ENCODE measurements at regions of chr1 and their contacts with region 1.

Region 1: DNA sequence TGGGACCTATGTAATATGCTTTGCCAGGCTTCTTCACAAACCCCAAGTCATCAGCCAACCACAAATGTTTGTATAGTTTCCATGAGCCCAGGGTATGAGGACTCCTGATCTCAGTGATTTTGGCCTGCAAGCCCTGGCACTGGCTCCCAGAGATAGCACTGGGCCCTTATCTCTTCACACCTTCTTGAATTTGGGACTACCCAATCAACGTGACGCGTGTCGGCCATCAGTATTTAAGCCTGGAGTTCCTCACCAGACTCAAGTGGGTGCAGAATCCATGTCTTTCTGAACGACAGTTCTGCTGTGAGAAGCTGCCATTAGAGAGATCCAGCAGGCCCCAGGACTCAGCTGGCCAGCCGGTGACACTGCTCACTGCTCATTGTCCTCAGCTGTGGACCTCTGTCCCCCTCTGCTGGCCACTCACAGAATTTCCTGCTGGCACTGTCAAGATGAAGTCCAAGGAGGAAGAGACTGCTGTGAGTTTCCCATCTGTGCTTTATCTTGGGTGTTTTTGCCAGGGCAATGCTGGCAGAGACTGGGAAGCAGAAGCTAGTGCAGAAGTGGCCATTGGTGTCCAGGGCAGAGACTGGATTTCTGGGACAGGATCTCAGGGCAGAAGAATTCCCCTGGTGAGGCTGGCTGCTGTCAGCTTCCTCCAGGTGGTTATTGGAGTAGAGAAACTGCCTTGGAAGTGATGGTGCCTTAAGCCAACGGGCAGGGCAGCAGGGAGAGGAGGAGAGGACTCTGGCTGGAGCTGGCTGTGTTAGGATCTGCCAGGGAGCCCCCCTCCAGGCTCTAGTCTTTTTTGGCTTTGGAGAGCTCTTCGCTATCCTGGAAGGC is 28.4 kb downstream of the TMCC2 start:
- DNase-seq: peak; percentile 83 to 93 (median 92)
- H3K4me3 ChIP-seq: no peak overlapping the region
- H3K27ac ChIP-seq: no peak overlapping the region
- H3K4me1 ChIP-seq: peaks cover 5% of the 10 kb centered on the region
- H3K27me3 ChIP-seq: no peaks in the 10 kb centered on the region
- CTCF ChIP-seq: peak; percentile 90 to 97 (median 96)
- EP300 ChIP-seq: no peak
- POLR2A ChIP-seq: no peak

Region 2: DNA sequence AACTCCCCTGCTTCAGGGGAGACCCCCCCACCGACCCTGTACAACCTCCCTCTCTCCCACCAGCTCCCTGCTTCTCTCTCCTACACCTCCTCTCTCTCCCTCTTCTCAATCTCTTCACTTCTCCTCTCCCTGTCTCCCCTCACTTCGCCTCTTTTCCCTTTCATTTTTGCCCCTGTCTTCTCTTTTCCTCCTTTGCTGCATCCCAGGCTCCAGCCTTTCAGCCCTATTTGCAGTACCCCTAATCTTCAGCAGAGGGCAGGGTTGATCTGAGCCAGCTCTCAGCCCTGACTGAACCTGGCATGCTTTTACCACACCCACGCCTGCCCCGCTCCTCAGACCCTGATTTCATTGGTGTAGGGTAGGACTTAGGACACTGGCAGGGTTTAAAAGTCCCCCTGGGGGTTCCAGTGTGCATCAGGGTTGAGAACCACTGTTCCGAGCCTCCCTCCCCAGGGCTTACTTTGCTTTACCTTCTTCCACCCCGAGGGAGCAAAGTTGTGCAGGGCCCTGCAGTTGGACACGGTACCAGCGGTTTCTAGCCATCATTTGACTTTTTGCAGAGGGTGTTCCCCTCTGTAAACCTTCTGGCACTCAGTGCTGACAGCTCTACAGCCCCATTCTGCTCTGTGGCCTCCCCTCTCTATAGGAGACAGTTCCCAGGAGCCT is 280.5 kb before region 1 on chr1:
- intact Hi-C with region 1: loop called in 2 of 4 experiments (anchors 5 kb)
- DNase-seq: peak; percentile 25 to 62 (median 55)
- H3K4me3 ChIP-seq: no peak overlapping the region
- H3K27ac ChIP-seq: no peak overlapping the region
- H3K4me1 ChIP-seq: no peaks in the 10 kb centered on the region
- H3K27me3 ChIP-seq: no peaks in the 10 kb centered on the region
- CTCF ChIP-seq: peak; percentile 63 to 70 (median 66)
- EP300 ChIP-seq: no peak
- POLR2A ChIP-seq: no peak

Region 3: DNA sequence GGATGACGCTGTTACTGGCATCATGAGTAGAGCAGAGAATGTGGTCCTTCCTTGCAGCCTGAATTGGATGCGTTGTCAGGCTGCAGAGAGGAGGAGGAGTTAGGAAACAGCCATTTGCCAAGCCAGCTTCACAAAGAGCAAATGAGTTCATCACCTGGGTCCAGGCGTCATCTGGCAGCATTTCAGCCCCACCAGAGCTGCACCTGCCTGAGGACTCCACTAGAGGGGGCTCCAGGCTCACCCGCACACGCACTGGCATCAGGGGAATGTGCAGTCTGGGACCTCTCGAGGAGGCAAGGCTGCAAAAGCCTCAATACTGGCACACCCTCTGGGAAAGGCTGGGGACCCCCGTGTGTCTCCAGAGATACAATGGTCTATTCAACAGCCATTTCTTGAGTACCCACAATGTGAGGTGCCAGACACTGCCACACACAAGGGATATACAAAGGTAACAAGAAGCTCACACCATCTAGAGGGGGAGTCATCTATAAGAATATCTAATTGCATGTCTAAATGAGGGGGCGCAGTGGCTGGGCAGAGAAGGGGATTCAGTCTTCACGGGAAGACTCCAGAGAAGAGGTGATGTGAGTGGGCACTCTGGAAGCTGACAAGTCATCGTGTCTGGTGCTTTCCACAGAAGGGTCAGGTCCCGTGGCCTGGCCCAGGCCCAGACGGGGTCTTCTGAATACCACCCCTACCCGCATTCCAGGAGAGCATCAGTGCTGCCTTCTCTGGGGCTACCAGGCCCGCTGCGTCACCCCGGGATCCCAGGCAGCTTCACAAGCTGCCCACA is 266.7 kb before region 1 on chr1:
- intact Hi-C with region 1: loop called in 1 of 4 experiments (anchors 5 kb)
- DNase-seq: peak; percentile 35 to 82 (median 61)
- H3K4me3 ChIP-seq: no peak overlapping the region
- H3K27ac ChIP-seq: no peak overlapping the region
- H3K4me1 ChIP-seq: no peaks in the 10 kb centered on the region
- H3K27me3 ChIP-seq: no peaks in the 10 kb centered on the region
- CTCF ChIP-seq: peak; percentile 56 to 70 (median 63)
- EP300 ChIP-seq: no peak
- POLR2A ChIP-seq: no peak

Region 4: DNA sequence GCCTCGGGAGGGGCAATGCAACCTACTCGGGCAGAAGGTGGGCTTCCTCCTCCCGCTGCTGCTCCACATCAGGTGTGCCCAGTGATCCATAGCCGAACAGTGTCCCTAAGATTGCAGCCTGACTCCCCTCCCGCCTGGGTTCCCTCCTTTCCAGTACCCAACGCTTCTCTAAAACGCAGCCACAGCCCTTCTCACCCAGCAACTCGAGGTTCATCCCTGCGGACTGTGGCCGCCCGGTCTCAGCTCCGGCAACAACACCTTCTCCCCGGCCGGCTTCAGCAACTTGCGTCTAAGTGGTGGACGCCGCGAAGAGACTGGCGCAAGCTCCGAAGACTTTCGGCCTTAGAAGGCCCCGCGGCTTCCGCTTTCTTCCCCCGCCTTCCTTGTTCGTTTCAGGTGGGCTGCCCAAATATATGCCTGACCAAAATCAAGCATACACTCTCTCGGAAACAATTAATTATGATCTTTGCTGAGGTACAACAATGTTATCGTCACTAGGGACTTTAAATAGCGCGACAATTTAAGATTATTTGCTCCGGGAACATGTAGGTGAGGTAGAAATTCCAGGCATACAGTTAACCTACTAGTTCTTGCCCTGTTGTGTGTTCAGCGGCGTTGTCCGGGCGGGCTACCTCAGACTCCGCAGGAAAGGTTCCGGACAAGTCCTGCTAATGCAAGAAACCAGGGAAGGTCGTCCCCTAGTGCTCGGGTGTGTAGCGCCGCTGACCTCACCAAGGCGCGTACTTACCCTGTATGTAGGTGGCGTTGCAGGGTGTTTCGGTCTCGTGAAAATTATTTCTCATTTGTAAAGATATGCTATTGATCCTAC is 134.3 kb before region 1 on chr1 and contains the start of gene RBBP5:
- intact Hi-C with region 1: loop called in 1 of 4 experiments (anchors 10 kb)
- DNase-seq: peak; percentile 88 to 95 (median 94)
- H3K4me3 ChIP-seq: peak within 1 kb of the TSS; percentile 83
- H3K27ac ChIP-seq: peak within 1 kb of the TSS; percentile 59 to 93
- H3K4me1 ChIP-seq: peaks cover 9% of the 10 kb centered on the region
- H3K27me3 ChIP-seq: no peaks in the 10 kb centered on the region
- CTCF ChIP-seq: peak in 2 of 3 donors; percentile 29 to 69
- EP300 ChIP-seq: no peak
- POLR2A ChIP-seq: peak; percentile 65
- total RNA-seq, gene RBBP5: 10.0 to 19.1 (median 15.1) TPM

Region 5: DNA sequence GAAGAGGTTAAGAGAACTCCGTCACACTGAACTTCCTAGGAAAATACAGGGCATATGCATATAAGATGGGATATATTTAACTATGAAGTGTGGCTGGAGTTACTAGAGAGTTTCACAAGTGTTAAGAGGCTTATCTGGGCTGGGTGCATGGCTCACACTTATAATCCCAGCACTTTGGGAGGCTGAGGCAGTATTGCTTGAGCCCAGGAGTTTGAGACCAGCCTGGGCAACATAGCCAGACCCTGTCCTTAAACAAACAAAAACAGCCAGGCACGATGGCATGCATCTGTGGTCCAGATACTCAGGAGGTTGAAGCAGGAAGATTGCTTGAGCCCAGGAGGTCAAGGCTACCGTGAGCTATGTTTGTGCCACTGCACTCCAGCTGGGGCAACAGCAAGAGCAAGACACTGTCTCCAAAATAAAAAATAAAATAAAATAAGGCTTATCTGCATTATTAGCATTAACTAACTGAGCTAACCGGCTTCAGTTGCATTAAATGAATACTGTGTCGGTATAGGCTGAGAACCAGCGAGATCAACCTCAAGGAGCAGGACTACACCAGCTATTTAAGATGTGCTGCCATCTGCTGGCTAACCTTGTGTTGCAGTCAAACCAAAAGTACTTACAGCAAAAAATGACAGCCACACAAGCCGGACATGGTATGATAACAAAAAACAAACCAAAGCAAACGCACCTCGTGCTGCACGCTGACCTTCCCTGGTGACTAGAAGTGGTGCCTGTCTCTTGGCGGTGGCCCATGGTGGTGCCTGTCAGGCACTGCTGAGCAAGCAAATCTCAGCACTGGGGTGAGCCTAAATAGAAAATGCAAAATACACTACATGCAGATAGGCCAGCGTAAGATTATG is 114.7 kb before region 1 on chr1:
- intact Hi-C with region 1: loop called in 2 of 4 experiments (anchors 5 to 10 kb)
- DNase-seq: peak; percentile 62 to 79 (median 71)
- H3K4me3 ChIP-seq: no peak overlapping the region
- H3K27ac ChIP-seq: no peak overlapping the region
- H3K4me1 ChIP-seq: peaks cover 3% of the 10 kb centered on the region
- H3K27me3 ChIP-seq: no peaks in the 10 kb centered on the region
- CTCF ChIP-seq: peak; percentile 54 to 63 (median 58)
- EP300 ChIP-seq: no peak
- POLR2A ChIP-seq: no peak

Region 6: DNA sequence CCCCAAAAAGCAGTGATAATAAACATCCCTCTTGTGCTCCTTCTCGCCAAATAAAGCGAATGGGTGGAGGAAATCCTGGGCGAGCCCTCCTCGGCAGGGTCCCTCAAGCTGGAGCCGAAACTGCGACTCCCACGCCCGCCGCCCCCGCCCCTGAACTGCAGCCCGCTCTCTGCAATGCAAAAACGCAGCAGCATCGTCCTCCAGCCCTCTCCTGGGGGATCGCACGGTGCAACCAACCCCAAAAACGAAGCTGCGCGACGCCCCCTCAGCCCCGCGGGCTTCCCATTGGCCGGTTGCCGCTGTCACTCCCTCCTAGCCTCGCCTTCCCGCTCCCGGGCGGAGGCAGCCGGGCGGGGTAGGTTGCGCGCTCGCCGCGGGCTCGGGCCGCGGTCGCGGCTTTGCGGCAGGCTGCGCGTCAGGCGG is 28.6 kb before region 1 on chr1 and contains the start of gene TMCC2:
- intact Hi-C with region 1: loop called in 1 of 4 experiments (anchors 5 kb)
- DNase-seq: peak; percentile 93 to 95 (median 94)
- H3K4me3 ChIP-seq: peak within 1 kb of the TSS; percentile 61
- H3K27ac ChIP-seq: peak within 1 kb of the TSS in 1 of 2 donors; percentile 14
- H3K4me1 ChIP-seq: peaks cover 10% of the 10 kb centered on the region
- H3K27me3 ChIP-seq: no peaks in the 10 kb centered on the region
- CTCF ChIP-seq: no peak
- EP300 ChIP-seq: no peak
- POLR2A ChIP-seq: peak; percentile 12
- total RNA-seq, gene TMCC2: 2.6 to 10.1 (median 7.8) TPM